Right ventricle myocardium superior (tissue), 1 donor: ENCODE measurements at regions of chr18 and their contacts with region 1.

Region 1: GRCh38 chr18:58584200-58585127 is 44.4 kb downstream of the ALPK2 start:
- DNase-seq: no peak
- ATAC-seq: no peak

Region 2: DNA sequence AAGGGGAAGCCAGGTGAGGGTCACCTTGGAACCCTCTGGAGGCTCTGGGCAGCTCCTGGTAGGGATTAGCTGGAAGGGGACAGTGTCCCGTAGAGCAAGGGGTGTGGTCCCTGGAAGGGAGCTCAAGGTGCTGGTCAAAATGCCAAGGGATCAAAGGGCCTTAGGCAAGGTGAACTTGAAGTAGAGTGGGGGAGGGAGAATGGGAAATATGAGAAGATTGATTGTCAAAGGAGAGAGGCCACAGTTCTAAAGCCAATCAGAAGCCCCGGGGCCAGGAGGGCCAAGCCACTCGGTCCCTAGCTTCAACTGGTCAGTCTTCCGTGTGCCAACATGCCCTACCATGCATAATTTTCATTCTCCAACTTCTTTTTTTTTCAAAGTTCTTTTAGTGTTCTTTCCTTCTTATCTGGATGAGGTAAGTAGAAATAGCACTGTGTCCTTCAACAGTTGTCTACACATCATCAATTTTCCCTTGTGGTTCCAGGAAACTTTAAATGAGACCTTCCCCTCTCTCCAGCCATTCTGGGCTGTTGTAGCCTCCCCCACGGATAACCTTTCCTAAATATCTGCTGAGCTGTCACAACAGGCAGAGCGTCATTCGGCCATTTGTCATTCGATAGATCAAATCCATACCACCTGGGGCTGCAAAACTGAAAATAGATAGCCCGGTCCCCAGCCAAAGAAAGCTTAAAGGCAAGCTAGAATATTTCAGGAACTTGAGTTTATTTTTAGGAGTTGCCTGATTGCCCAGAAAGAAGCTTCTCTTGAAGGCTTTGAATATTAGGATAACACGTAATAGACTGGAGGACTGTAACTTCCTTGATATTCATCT is 38.9 kb before region 1 on chr18:
- intact Hi-C with region 1: loop called (anchors 2 kb)
- DNase-seq: no peak
- ATAC-seq: peak; percentile 53

Region 3: GRCh38 chr18:58953627-58954026 is 369.2 kb after region 1 on chr18:
- intact Hi-C with region 1: no loop called
- DNase-seq: peak; percentile 50
- ATAC-seq: peak; percentile 92